Activated T-helper 1 cell treated with anti-CD3 and anti-CD28 coated beads, Interleukin-12 subunit alpha, Interleukin-12 subunit beta, Interleukin-2, Interleukin-4 antibody, amounts not matched to agents 30 ng/mL and 10 ng/mL and 1 ng/mL, durations not matched to agents 14 hours and 24 hours and 36 hours (primary cell): ENCODE measurements at regions of chr1 and their contacts with region 1.

Region 1: DNA sequence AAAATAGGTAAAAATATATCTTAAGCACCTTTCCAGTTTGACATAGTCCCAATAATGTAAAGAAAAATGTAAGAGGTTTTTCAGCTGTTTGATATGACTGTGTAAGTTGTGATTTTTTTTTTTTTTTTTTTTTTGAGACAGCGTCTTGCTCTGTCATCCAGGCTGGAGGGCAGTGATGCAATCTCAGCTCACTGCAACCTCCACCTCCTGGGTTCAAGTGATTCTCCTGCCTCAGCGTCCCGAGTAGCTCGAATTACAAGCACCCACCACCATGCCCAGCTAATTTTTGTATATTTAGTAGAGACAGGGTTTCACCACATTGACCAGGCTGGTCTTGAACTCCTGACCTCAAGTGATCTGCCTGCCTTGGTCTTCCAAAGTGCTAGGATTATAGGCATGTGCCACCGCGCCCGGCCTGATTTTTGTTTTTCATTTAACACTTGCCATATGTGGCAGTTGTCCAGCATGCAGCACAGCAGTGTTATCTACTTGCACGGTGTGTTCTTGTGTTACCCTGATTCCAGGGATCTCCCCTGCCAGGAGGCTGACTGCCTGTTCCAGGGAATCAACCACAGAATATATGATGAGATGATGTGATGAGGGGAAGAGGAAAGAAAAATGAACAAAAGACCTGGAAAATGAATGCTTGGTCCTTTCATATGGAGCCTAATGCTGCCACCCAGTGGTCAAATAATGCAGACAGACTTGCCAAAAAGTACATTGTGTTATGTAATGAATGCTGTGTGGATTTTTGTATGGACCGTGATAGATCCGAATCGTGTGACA is 79.0 kb downstream of the RAVER2 start:
- DNase-seq: peak; percentile 19
- H3K4me3 Mint-ChIP-seq: no peak overlapping the region
- H3K27ac Mint-ChIP-seq: no peak overlapping the region
- H3K4me1 Mint-ChIP-seq: peaks cover 36% of the 10 kb centered on the region
- H3K27me3 Mint-ChIP-seq: peaks cover 7% of the 10 kb centered on the region

Region 2: GRCh38 chr1:64686828-64687724 is 136.8 kb before region 1 on chr1:
- intact Hi-C with region 1: loop called (anchors 1 kb)
- DNase-seq: no peak
- H3K4me3 Mint-ChIP-seq: no peak overlapping the region
- H3K27ac Mint-ChIP-seq: no peak overlapping the region
- H3K4me1 Mint-ChIP-seq: peaks cover 7% of the 10 kb centered on the region
- H3K27me3 Mint-ChIP-seq: no peaks in the 10 kb centered on the region

Region 3: GRCh38 chr1:64744492-64745180 is 79.2 kb before region 1 on chr1 and contains the start of gene RAVER2:
- intact Hi-C with region 1: loop called (anchors 2 kb)
- DNase-seq: peak; percentile 28
- H3K4me3 Mint-ChIP-seq: peak within 1 kb of the TSS; percentile 81
- H3K27ac Mint-ChIP-seq: no peak within 1 kb of the TSS
- H3K4me1 Mint-ChIP-seq: peaks cover 5% of the 10 kb centered on the region
- H3K27me3 Mint-ChIP-seq: peaks cover 48% of the 10 kb centered on the region
- total RNA-seq, gene RAVER2: 0.34 and 0.36 TPM in 2 replicates

Region 4: GRCh38 chr1:65036545-65037180 is 212.8 kb after region 1 on chr1:
- intact Hi-C with region 1: loop called (anchors 2 kb)
- DNase-seq: no peak
- H3K4me3 Mint-ChIP-seq: no peak overlapping the region
- H3K27ac Mint-ChIP-seq: no peak overlapping the region
- H3K4me1 Mint-ChIP-seq: peaks cover 9% of the 10 kb centered on the region
- H3K27me3 Mint-ChIP-seq: peaks cover 5% of the 10 kb centered on the region

Region 5: GRCh38 chr1:65840683-65841082 is 1016.8 kb after region 1 on chr1:
- intact Hi-C with region 1: no loop called
- DNase-seq: no peak
- H3K4me3 Mint-ChIP-seq: no peak overlapping the region
- H3K27ac Mint-ChIP-seq: no peak overlapping the region
- H3K4me1 Mint-ChIP-seq: no peaks in the 10 kb centered on the region
- H3K27me3 Mint-ChIP-seq: peaks cover 2% of the 10 kb centered on the region